Vagina (tissue), 2 donors: ENCODE measurements at regions of chr17 and their contacts with region 1.

Region 1: DNA sequence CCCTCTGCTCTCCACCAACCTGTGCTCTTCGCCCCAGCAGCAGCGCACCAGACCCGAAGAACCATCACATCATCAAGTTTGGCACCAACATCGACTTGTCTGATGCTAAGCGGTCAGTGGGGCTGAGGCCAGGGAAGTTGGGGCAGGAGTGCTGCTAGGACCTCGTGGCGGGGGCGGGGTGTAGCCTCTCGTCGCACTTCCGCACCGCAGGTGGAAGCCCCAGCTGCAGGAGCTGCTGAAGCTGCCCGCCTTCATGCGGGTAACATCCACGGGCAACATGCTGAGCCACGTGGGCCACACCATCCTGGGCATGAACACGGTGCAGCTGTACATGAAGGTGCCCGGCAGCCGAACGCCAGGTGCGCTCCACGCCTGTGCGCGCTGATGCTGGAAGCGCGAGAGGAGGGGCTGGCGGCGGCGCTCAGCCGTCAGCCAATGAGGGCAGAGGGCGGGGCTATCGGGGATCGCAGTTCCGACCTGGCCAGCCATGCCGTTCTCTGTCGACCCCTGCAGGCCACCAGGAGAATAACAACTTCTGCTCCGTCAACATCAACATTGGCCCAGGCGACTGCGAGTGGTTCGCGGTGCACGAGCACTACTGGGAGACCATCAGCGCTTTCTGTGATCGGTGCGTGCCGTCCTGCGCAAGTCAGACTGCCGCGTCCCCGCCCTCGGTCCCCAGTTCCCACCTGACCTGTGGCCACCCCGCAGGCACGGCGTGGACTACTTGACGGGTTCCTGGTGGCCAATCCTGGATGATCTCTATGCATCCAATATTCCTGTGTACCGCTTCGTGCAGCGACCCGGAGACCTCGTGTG is 3.2 kb upstream of the TMEM88 start:
- DNase-seq: peak; percentile 90 to 96
- H3K4me3 ChIP-seq: peak overlapping the region in 1 of 2 donors; percentile 2
- H3K27ac ChIP-seq: peak overlapping the region; percentile 56
- H3K4me1 ChIP-seq: peaks cover 30% of the 10 kb centered on the region
- H3K27me3 ChIP-seq: no peaks in the 10 kb centered on the region
- CTCF ChIP-seq: peak; percentile 95 to 99 (median 98)
- POLR2A ChIP-seq: no peak

Region 2: GRCh38 chr17:7561589-7562207 is 289.9 kb before region 1 on chr17 and contains the start of gene SENP3:
- intact Hi-C with region 1: no loop called
- DNase-seq: peak in 1 of 2 donors; percentile 86
- H3K4me3 ChIP-seq: peak within 1 kb of the TSS; percentile 70 to 82
- H3K27ac ChIP-seq: peak within 1 kb of the TSS; percentile 88
- H3K4me1 ChIP-seq: peaks cover 70% of the 10 kb centered on the region
- H3K27me3 ChIP-seq: no peaks in the 10 kb centered on the region
- CTCF ChIP-seq: no peak
- POLR2A ChIP-seq: peak in 1 of 2 donors; percentile 40
- total RNA-seq, gene SENP3: 60.2 TPM

Region 3: DNA sequence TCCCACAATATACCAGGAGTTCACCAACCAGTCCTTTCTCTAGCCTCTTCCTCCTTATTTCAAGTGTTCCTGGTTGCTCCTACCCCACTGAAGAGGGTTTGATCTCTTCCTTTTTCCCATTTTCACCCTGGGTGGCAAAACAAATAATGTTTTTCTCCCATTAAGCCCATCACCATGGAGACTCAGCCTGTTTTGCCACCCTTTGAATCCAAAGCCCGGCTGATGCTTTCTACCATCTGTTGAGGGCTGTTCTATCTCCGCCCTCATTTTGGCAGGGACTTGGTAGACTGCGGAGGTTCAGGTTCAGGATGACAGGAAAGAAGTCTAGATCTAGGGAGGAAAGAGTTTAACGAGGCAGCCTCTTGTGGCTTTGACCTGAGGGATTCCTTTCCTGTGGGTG is 131.5 kb before region 1 on chr17:
- intact Hi-C with region 1: no loop called
- DNase-seq: no peak
- H3K4me3 ChIP-seq: no peak overlapping the region
- H3K27ac ChIP-seq: no peak overlapping the region
- H3K4me1 ChIP-seq: peaks cover 24% of the 10 kb centered on the region
- H3K27me3 ChIP-seq: no peaks in the 10 kb centered on the region
- CTCF ChIP-seq: no peak
- POLR2A ChIP-seq: no peak

Region 4: DNA sequence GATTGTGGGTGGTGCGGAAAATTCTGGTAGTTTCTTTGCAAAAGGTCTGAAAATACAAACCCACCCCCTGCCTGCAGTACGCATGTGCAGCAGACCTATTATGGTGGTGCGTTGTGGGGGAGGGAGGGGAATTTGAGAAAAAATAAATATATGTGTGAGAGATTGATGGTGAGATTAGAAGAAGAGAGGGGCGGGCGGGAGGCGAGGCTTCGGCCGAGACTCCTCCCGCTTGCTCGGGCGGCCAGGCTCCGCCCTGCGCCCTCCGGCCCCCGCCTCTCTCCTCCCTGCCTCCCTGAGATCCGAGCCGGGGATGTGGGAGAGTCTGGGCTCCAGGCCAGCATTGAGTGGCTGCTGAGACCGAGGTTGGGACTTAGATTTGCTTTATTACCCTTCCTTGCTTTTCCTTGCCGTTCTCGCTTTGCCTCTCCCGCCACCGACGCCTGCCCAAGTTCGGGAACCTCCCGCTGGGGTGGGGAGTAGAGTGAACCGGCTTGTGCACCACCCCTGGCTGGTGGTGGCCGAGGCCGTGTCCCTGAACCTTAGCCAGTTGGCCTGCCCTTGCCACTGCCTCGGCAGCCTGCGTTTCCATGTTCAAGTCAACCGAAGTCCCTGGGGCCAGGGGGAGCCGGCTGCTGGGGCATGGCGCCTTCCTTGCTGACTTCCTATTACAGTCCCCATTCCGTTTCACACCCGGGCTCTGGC is 36.0 kb after region 1 on chr17:
- intact Hi-C with region 1: loop called (anchors 5 kb)
- DNase-seq: peak in 1 of 2 donors; percentile 95
- H3K4me3 ChIP-seq: peak overlapping the region; percentile 56 to 86
- H3K27ac ChIP-seq: peak overlapping the region; percentile 98
- H3K4me1 ChIP-seq: peaks cover 49% of the 10 kb centered on the region
- H3K27me3 ChIP-seq: no peaks in the 10 kb centered on the region
- CTCF ChIP-seq: no peak
- POLR2A ChIP-seq: peak in 1 of 2 donors; percentile 40